Natural killer cell (primary cell): ENCODE measurements at regions of chr10 and their contacts with region 1.

Region 1: DNA sequence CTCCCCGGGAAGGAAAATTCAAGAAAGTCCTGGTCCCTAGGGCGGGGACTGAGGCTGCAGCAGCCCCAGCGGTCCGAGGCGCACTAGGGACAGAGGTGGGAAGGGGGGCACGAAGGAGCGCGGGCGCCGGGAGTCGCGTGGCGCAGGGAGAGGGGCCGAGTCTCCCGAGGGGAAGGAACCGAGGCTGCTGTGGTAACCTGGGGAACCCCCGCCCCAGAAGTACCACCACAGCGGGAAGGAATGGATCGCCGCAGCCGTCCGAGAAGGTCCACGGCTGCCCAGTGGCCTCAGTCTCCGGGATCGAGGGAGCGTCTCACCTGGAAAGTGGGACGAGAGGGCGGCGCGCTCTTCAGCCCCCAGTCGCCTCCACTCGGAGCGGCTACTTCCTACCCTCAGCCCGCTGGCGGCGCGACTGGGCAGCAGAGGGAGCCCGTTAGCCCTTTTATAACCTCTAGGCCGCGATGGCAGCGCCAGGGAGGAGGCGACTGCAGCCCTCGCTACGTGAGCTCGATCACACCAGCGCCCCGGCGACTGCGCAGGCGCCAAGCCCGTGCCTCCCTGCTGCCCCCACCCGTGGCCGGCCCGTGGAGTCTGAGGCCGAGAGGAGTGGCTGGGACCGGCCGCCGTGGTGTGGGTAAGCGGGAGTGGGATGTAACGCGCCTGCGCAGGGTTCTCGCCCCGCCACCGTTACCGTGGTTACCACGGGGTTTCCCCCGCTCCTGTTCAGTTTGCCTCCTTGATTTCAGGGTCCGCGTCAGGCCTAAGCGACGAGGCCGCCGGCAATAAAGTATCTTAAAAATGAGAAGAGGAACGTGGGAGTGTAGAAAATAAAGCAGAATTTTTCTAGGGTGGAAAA is at the start of gene P4HA1:
- DNase-seq: peak; percentile 97 to 99
- ATAC-seq: peak; percentile 89 to 97 (median 91)
- H3K4me3 ChIP-seq: peak within 1 kb of the TSS; percentile 63
- H3K4me3 Mint-ChIP-seq: peak within 1 kb of the TSS; percentile 97
- H3K27ac ChIP-seq: peak within 1 kb of the TSS; percentile 97
- H3K27ac Mint-ChIP-seq: peak within 1 kb of the TSS; percentile 96 to 98
- H3K4me1 ChIP-seq: no peaks in the 10 kb centered on the region
- H3K4me1 Mint-ChIP-seq: peaks cover 17 to 31% of the 10 kb centered on the region in 2 donors
- H3K27me3 ChIP-seq: no peaks in the 10 kb centered on the region
- H3K27me3 Mint-ChIP-seq: no peaks in the 10 kb centered on the region
- CTCF ChIP-seq: peak; percentile 58
- total RNA-seq, gene P4HA1: 13.0 to 16.3 (median 13.9) TPM

Region 2: DNA sequence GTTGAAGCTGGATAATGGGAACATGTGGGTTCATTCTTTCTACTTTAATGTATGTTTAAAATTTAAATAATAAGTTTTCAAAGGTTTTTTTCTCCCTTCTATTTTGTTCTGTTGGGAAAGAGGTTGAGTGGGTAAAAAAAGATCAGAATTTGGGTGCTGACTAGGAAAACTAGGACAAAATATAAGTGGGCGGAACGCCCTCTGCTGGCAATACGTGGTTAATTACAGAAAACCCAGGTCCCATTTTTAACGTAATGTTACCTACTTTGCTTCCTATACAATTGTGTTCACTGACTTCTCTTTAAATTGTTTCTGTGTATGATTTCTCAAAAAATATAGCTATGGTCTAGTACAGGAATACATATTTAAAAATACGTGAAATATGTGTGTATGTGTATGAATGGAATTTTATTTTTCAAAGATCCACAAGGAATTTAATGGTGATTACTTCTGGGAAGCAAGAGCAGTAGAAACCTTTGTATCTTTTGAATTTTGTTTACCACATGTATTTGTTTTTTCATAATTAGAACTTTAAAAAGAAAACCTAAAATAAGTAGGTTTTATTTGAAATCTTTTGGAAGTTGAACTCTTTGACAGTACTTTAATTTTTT is 62.5 kb after region 1 on chr10:
- intact Hi-C with region 1: loop called (anchors 2 kb)
- DNase-seq: peak; percentile 30 to 80
- ATAC-seq: peak; percentile 67 to 81 (median 70)
- H3K4me3 ChIP-seq: no peak overlapping the region
- H3K4me3 Mint-ChIP-seq: no peak overlapping the region
- H3K27ac ChIP-seq: no peak overlapping the region
- H3K27ac Mint-ChIP-seq: no peak overlapping the region
- H3K4me1 ChIP-seq: no peaks in the 10 kb centered on the region
- H3K4me1 Mint-ChIP-seq: peaks cover 19 to 27% of the 10 kb centered on the region in 2 donors
- H3K27me3 ChIP-seq: no peaks in the 10 kb centered on the region
- H3K27me3 Mint-ChIP-seq: no peaks in the 10 kb centered on the region
- CTCF ChIP-seq: peak; percentile 88

Region 3: GRCh38 chr10:73167783-73168464 is 71.2 kb after region 1 on chr10 and contains the starts of genes ECD and FAM149B1:
- intact Hi-C with region 1: loop called (anchors 2 kb)
- DNase-seq: peak; percentile 93 to 96
- ATAC-seq: peak; percentile 89 to 97 (median 92)
- H3K4me3 ChIP-seq: peak within 1 kb of the TSS; percentile 89
- H3K4me3 Mint-ChIP-seq: peak within 1 kb of the TSS; percentile 100
- H3K27ac ChIP-seq: peak within 1 kb of the TSS; percentile 93
- H3K27ac Mint-ChIP-seq: peak within 1 kb of the TSS; percentile 100
- H3K4me1 ChIP-seq: peaks cover 9% of the 10 kb centered on the region
- H3K4me1 Mint-ChIP-seq: peaks cover 37 to 40% of the 10 kb centered on the region in 2 donors
- H3K27me3 ChIP-seq: no peaks in the 10 kb centered on the region
- H3K27me3 Mint-ChIP-seq: no peaks in the 10 kb centered on the region
- CTCF ChIP-seq: peak; percentile 22
- total RNA-seq, gene ECD: 48.4 to 53.6 (median 52.1) TPM
- total RNA-seq, gene FAM149B1: 12.7 to 17.6 (median 12.8) TPM

Region 4: GRCh38 chr10:73252445-73253224 is 156.0 kb after region 1 on chr10 and contains the start of gene MRPS16:
- intact Hi-C with region 1: loop called (anchors 2 kb)
- DNase-seq: peak; percentile 90 to 97
- ATAC-seq: peak; percentile 89 to 98 (median 93)
- H3K4me3 ChIP-seq: peak within 1 kb of the TSS; percentile 70
- H3K4me3 Mint-ChIP-seq: peak within 1 kb of the TSS; percentile 97
- H3K27ac ChIP-seq: peak within 1 kb of the TSS; percentile 86
- H3K27ac Mint-ChIP-seq: peak within 1 kb of the TSS; percentile 95 to 97
- H3K4me1 ChIP-seq: peaks cover 18% of the 10 kb centered on the region
- H3K4me1 Mint-ChIP-seq: peaks cover 27 to 36% of the 10 kb centered on the region in 2 donors
- H3K27me3 ChIP-seq: no peaks in the 10 kb centered on the region
- H3K27me3 Mint-ChIP-seq: no peaks in the 10 kb centered on the region
- CTCF ChIP-seq: no peak
- total RNA-seq, gene MRPS16: 28.2 to 39.4 (median 31.4) TPM